Ovary (tissue), 10 donors: ENCODE measurements at regions of chr5 and their contacts with region 1.

Region 1: DNA sequence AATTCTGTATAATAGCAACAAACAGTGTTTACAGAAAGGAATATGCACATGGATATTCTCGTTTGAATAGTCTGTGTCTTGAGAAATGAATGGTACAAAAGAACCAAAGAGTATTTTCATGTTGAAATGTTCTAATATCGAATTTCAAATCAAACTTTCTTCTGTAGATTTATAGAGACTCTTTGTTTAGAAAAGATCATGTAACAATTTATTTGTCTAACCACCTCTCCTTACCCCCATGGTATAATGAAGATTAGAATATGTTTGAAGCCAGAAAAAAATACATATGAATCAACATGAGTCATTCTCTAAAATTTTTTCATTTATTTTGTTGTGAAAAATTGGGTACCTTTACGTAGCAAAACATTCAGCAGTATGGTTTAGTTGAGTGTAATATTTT is 285.6 kb downstream of the PRR16 start:
- DNase-seq: no peak
- H3K4me3 ChIP-seq: no peak overlapping the region
- H3K27ac ChIP-seq: no peak overlapping the region
- H3K4me1 ChIP-seq: no peaks in the 10 kb centered on the region
- H3K27me3 ChIP-seq: no peaks in the 10 kb centered on the region
- CTCF ChIP-seq: no peak
- EP300 ChIP-seq: no peak
- POLR2A ChIP-seq: no peak

Region 2: DNA sequence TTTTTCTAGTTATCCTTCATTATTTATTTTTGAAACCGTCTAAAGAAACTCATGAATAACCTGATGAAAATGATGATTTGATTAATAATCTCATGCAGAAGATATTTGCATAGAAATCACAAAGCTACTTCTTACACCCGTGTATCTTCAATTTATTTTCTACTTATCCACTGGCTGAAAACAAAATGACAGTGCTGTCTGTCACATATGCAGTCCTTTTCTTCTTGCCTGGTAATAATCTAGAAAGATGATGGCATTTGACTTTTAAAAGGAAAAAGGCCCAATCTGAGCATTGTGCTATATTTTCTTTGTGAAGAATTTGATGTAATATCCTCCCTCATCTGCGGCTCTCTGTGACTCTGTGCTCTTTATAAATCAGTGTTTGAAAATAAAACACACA is 32.4 kb before region 1 on chr5:
- intact Hi-C with region 1: loop called in 1 of 4 experiments (anchors 2 kb)
- DNase-seq: no peak
- H3K4me3 ChIP-seq: no peak overlapping the region
- H3K27ac ChIP-seq: no peak overlapping the region
- H3K4me1 ChIP-seq: no peaks in the 10 kb centered on the region
- H3K27me3 ChIP-seq: no peaks in the 10 kb centered on the region
- CTCF ChIP-seq: no peak
- EP300 ChIP-seq: no peak
- POLR2A ChIP-seq: no peak

Region 3: GRCh38 chr5:120958877-120959485 is 209.2 kb after region 1 on chr5:
- intact Hi-C with region 1: no loop called
- DNase-seq: no peak
- H3K4me3 ChIP-seq: no peak overlapping the region
- H3K27ac ChIP-seq: no peak overlapping the region
- H3K4me1 ChIP-seq: no peaks in the 10 kb centered on the region
- H3K27me3 ChIP-seq: no peaks in the 10 kb centered on the region
- CTCF ChIP-seq: no peak
- EP300 ChIP-seq: no peak
- POLR2A ChIP-seq: no peak